ENCODE measurements at regions of chr20 and their contacts with region 1.

Region 1: GRCh38 chr20:21125849-21126580 is at the start of gene KIZ:
- DNase-seq: peak; percentile 94 to 99 (median 98)
- ATAC-seq: peak; percentile 97
- H3K4me3 ChIP-seq: peak within 1 kb of the TSS; percentile 83 to 87
- H3K4me3 Mint-ChIP-seq: peak within 1 kb of the TSS; percentile 86
- H3K27ac ChIP-seq: peak within 1 kb of the TSS; percentile 68
- H3K27ac Mint-ChIP-seq: peak within 1 kb of the TSS; percentile 97
- H3K4me1 ChIP-seq: peaks cover 14% of the 10 kb centered on the region
- H3K4me1 Mint-ChIP-seq: peaks cover 30% of the 10 kb centered on the region
- H3K27me3 ChIP-seq: peaks cover 0 to under 1% of the 10 kb centered on the region in 2 experiments
- H3K27me3 Mint-ChIP-seq: peaks cover under 1% of the 10 kb centered on the region
- CTCF ChIP-seq: peak; percentile 53
- total RNA-seq, gene KIZ: 18.4 to 26.1 TPM

Region 2: DNA sequence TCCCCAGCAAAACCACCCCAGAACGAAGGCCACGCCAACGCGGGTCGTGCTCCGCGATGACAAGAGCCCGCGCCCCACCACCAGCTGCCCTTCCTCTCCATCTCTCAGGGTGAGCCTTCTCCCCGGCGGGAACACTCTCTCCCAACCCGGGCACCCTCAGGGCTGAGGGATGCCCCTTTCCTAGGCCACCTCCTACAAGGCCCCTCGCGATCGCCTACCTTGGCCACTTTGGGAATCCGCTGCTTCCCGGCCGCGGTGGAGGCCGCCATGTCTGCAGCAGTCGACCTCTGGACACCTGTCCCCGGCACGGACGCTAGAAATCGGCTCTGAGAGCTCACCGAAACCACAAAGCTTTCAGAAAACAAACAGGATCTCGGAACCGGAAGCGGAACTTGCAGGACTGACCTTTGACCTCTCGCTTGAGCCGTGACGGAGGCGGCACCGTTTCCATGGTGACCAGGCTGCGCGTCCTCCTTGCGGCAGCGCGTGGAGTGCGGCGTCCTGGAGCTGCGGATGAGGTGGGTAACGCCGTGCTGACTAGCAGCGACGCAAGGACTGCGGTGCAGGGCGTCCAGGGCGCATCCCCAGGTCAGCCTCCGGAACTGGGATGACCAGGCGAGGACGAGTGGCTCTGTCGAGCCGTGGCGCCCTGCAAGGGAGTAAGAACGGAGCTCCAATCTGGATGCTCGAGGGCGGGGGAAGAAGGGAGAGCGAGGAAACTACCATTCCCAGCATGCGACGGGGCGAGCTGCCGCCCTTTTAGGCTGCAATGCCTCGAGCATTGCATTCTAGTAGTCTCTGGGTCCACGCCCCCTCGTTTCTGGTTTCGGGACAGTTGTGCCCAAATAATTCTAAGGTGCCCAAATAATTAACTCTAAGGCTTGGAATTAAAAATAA is 1073.7 kb before region 1 on chr20 and contains the starts of genes CFAP61 and CRNKL1:
- CTCF ChIA-PET with region 1: no interaction called
- POLR2A ChIA-PET with region 1: no interaction called
- intact Hi-C with region 1: loop called (anchors 2 to 5 kb)
- DNase-seq: peak; percentile 93 to 99 (median 98)
- ATAC-seq: peak; percentile 94
- H3K4me3 ChIP-seq: peak within 1 kb of the TSS; percentile 86 to 96
- H3K4me3 Mint-ChIP-seq: peak within 1 kb of the TSS; percentile 99
- H3K27ac ChIP-seq: peak within 1 kb of the TSS; percentile 86 to 92
- H3K27ac Mint-ChIP-seq: peak within 1 kb of the TSS; percentile 98
- H3K4me1 ChIP-seq: peaks cover 12% of the 10 kb centered on the region
- H3K4me1 Mint-ChIP-seq: peaks cover 29% of the 10 kb centered on the region
- H3K27me3 ChIP-seq: no peaks in the 10 kb centered on the region
- H3K27me3 Mint-ChIP-seq: peaks cover 10% of the 10 kb centered on the region
- CTCF ChIP-seq: no peak
- total RNA-seq, gene CFAP61: not detected
- total RNA-seq, gene CRNKL1: 34.1 to 39.7 TPM

Region 3: GRCh38 chr20:20802328-20802727 is 323.7 kb before region 1 on chr20:
- CTCF ChIA-PET with region 1: no interaction called
- POLR2A ChIA-PET with region 1: no interaction called
- intact Hi-C with region 1: no loop called
- DNase-seq: no peak
- ATAC-seq: no peak
- H3K4me3 ChIP-seq: no peak overlapping the region
- H3K4me3 Mint-ChIP-seq: no peak overlapping the region
- H3K27ac ChIP-seq: no peak overlapping the region
- H3K27ac Mint-ChIP-seq: no peak overlapping the region
- H3K4me1 ChIP-seq: no peaks in the 10 kb centered on the region
- H3K4me1 Mint-ChIP-seq: no peaks in the 10 kb centered on the region
- H3K27me3 ChIP-seq: no peaks in the 10 kb centered on the region
- H3K27me3 Mint-ChIP-seq: peaks cover 4% of the 10 kb centered on the region
- CTCF ChIP-seq: no peak

Region 4: GRCh38 chr20:21048841-21049273 is 77.2 kb before region 1 on chr20:
- CTCF ChIA-PET with region 1: interaction called, 4 read pairs
- POLR2A ChIA-PET with region 1: no interaction called
- intact Hi-C with region 1: loop called (anchors 1 to 2 kb)
- DNase-seq: peak; percentile 11 to 63 (median 52)
- ATAC-seq: peak; percentile 46
- H3K4me3 ChIP-seq: no peak overlapping the region
- H3K4me3 Mint-ChIP-seq: no peak overlapping the region
- H3K27ac ChIP-seq: no peak overlapping the region
- H3K27ac Mint-ChIP-seq: no peak overlapping the region
- H3K4me1 ChIP-seq: no peaks in the 10 kb centered on the region
- H3K4me1 Mint-ChIP-seq: no peaks in the 10 kb centered on the region
- H3K27me3 ChIP-seq: peaks cover 0 to 7% of the 10 kb centered on the region in 2 experiments
- H3K27me3 Mint-ChIP-seq: peaks cover 18% of the 10 kb centered on the region
- CTCF ChIP-seq: peak; percentile 65

Region 5: GRCh38 chr20:21303061-21303871 is 177.3 kb after region 1 on chr20 and contains the start of gene XRN2:
- CTCF ChIA-PET with region 1: no interaction called
- POLR2A ChIA-PET with region 1: no interaction called
- intact Hi-C with region 1: loop called (anchors 2 to 5 kb)
- DNase-seq: peak; percentile 87 to 96 (median 95)
- ATAC-seq: peak; percentile 77
- H3K4me3 ChIP-seq: peak within 1 kb of the TSS; percentile 69 to 92
- H3K4me3 Mint-ChIP-seq: peak within 1 kb of the TSS; percentile 98
- H3K27ac ChIP-seq: peak within 1 kb of the TSS; percentile 93 to 94
- H3K27ac Mint-ChIP-seq: peak within 1 kb of the TSS; percentile 99
- H3K4me1 ChIP-seq: peaks cover 26% of the 10 kb centered on the region
- H3K4me1 Mint-ChIP-seq: peaks cover 25% of the 10 kb centered on the region
- H3K27me3 ChIP-seq: no peaks in the 10 kb centered on the region
- H3K27me3 Mint-ChIP-seq: no peaks in the 10 kb centered on the region
- CTCF ChIP-seq: no peak
- total RNA-seq, gene XRN2: 52.1 to 54.2 TPM

Measured in CD8-positive, alpha-beta T cell (primary cell).